ENCODE measurements at regions of chr15 and their contacts with region 1.

Region 1: GRCh38 chr15:96585484-96586386 is 255.2 kb downstream of the NR2F2 start:
- H3K4me3 ChIP-seq: no peak overlapping the region
- H3K27ac ChIP-seq: no peak overlapping the region
- H3K4me1 ChIP-seq: no peaks in the 10 kb centered on the region
- CTCF ChIP-seq: no peak

Region 2: GRCh38 chr15:96247621-96248305 is 338.0 kb before region 1 on chr15:
- CTCF ChIA-PET with region 1: no interaction called
- POLR2A ChIA-PET with region 1: no interaction called
- H3K4me3 ChIP-seq: no peak overlapping the region
- H3K27ac ChIP-seq: no peak overlapping the region
- H3K4me1 ChIP-seq: no peaks in the 10 kb centered on the region
- CTCF ChIP-seq: no peak

Region 3: GRCh38 chr15:96746665-96747064 is 160.9 kb after region 1 on chr15:
- CTCF ChIA-PET with region 1: interaction called, 11 read pairs
- POLR2A ChIA-PET with region 1: no interaction called
- H3K4me3 ChIP-seq: no peak overlapping the region
- H3K27ac ChIP-seq: no peak overlapping the region
- H3K4me1 ChIP-seq: no peaks in the 10 kb centered on the region
- CTCF ChIP-seq: no peak

Region 4: DNA sequence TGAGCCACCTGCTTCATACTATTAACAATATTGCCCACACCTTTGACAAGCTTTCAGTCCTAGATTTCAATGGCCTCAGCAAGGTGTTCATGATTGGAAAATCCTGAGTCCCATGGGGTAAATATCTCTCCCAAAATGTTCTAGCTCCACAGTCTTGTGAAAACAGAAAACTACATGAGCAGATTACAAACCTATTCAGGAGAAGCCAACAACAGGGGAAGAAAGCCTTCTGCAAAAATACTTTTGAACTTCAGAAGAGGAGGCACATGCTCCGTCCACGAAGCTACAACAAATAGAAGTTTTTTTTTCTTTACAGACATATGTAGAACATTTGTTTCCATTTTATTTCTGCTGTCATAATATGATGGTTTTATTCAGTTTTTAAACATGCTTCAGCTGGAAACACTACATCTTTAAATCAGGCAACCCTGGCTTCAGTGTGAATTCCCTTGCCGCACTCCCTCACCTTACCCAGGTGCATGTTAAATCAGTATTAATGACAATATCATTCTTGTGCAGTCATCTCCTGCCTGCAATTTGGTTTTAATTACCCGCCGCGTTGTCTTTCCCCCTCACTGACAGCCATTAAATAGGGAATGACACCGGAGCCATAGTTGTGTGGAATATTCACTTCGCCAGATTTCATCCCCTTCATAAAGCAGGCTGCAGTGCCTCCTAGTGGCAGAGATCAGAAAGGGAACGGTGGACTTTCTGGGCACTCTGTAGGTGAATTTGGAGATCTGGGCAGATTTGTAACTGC is 649.3 kb after region 1 on chr15:
- CTCF ChIA-PET with region 1: interaction called, 12 read pairs
- POLR2A ChIA-PET with region 1: no interaction called
- H3K4me3 ChIP-seq: no peak overlapping the region
- H3K27ac ChIP-seq: no peak overlapping the region
- H3K4me1 ChIP-seq: peaks cover 8% of the 10 kb centered on the region
- CTCF ChIP-seq: 0 out of 2 replicates have a peak, but pooled peaks have one; percentile 9